IMR-90 (cell line): ENCODE measurements at regions of chr9 and their contacts with region 1.

Region 1: GRCh38 chr9:715743-716400 is 125.6 kb upstream of the DMRT1 start:
- DNase-seq: peak; percentile 68
- ATAC-seq: peak; percentile 75
- H3K4me3 ChIP-seq: no peak overlapping the region
- H3K27ac ChIP-seq: no peak overlapping the region
- H3K4me1 ChIP-seq: peaks cover 20% of the 10 kb centered on the region
- H3K27me3 ChIP-seq: no peaks in the 10 kb centered on the region
- CTCF ChIP-seq: no peak
- POLR2A ChIP-seq: no peak
- RAD21 ChIP-seq: no peak

Region 2: GRCh38 chr9:727743-728142 is 11.9 kb after region 1 on chr9:
- CTCF ChIA-PET with region 1: no interaction called
- POLR2A ChIA-PET with region 1: no interaction called
- dilution Hi-C with region 1: no loop called
- in situ Hi-C with region 1: no loop called
- intact Hi-C with region 1: loop called (anchors 2 kb)
- DNase-seq: no peak
- ATAC-seq: no peak
- H3K4me3 ChIP-seq: no peak overlapping the region
- H3K27ac ChIP-seq: no peak overlapping the region
- H3K4me1 ChIP-seq: no peaks in the 10 kb centered on the region
- H3K27me3 ChIP-seq: no peaks in the 10 kb centered on the region
- CTCF ChIP-seq: no peak
- POLR2A ChIP-seq: no peak
- RAD21 ChIP-seq: no peak

Region 3: DNA sequence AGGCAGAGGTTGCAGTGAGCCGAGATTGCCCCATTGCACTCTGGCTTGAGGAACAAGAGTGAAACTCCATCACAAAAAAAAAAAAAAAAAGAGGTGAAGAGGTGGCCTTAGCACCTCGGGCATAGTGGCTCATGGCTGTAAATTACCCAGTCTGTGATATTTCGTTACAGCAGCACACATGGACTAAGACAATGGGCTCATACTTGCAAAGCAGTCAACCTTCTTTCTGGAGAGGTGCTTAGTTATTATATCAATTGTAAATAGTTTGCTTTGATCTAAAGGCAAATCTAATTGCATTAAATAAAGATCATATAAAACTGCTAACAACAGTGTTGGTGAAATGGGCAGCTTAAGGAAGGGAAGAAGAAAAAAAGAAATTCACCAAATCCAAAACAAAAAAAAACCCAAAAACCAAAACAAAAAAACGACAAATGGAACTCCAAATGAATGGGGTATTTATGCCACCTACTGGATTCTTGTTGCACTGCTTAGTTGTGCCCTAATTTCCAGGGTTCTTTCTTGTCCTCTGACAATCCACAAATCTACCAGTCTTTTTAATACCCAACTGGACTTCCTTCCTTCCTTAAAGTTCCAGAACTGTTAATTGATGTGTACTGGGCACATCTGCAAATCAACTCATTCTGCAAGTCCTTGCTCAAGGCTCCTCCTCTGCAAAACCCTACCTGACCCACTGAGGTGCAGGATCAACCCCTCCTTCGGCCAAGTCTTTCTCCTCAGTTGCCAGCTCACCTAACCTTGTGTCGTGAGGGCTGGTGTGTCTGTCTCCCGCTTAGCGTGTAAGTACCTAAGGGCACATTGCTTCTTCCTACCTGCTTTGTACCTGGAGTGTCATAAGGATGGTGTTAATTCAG is 90.6 kb after region 1 on chr9:
- CTCF ChIA-PET with region 1: no interaction called
- POLR2A ChIA-PET with region 1: no interaction called
- dilution Hi-C with region 1: no loop called
- in situ Hi-C with region 1: no loop called
- intact Hi-C with region 1: no loop called
- DNase-seq: peak; percentile 51
- ATAC-seq: peak; percentile 37; the same call in 1 of the 2 replicates
- H3K4me3 ChIP-seq: no peak overlapping the region
- H3K27ac ChIP-seq: no peak overlapping the region
- H3K4me1 ChIP-seq: peaks cover 8% of the 10 kb centered on the region
- H3K27me3 ChIP-seq: no peaks in the 10 kb centered on the region
- CTCF ChIP-seq: peak; percentile 92
- POLR2A ChIP-seq: no peak
- RAD21 ChIP-seq: peak; percentile 88